Activated B cell treated with CpG ODN at 0.5 μM for 24 hours (primary cell): ENCODE measurements at regions of chr13 and their contacts with region 1.

Region 1: GRCh38 chr13:21603531-21604448 is at the start of gene MICU2:
- DNase-seq: peak; percentile 93
- ATAC-seq: peak; percentile 94
- H3K4me3 Mint-ChIP-seq: peak within 1 kb of the TSS; percentile 88
- H3K27ac Mint-ChIP-seq: peak within 1 kb of the TSS; percentile 89
- H3K4me1 Mint-ChIP-seq: peaks cover 31% of the 10 kb centered on the region
- H3K27me3 Mint-ChIP-seq: peaks cover 16% of the 10 kb centered on the region
- CTCF ChIP-seq: no peak
- total RNA-seq, gene MICU2: 37.0 and 41.3 TPM in 2 replicates

Region 2: GRCh38 chr13:20773194-20774080 is 830.4 kb before region 1 on chr13 and contains the start of gene EEF1AKMT1:
- CTCF ChIA-PET with region 1: no interaction called
- POLR2A ChIA-PET with region 1: no interaction called
- intact Hi-C with region 1: loop called (anchors 5 kb)
- DNase-seq: peak; percentile 94
- ATAC-seq: peak; percentile 95
- H3K4me3 Mint-ChIP-seq: peak within 1 kb of the TSS; percentile 98
- H3K27ac Mint-ChIP-seq: peak within 1 kb of the TSS; percentile 99
- H3K4me1 Mint-ChIP-seq: peaks cover 21% of the 10 kb centered on the region
- H3K27me3 Mint-ChIP-seq: no peaks in the 10 kb centered on the region
- CTCF ChIP-seq: no peak
- total RNA-seq, gene EEF1AKMT1: 3.9 and 7.4 TPM in 2 replicates

Region 3: GRCh38 chr13:21297914-21298831 is 305.6 kb before region 1 on chr13:
- CTCF ChIA-PET with region 1: interaction called, 3 read pairs
- POLR2A ChIA-PET with region 1: interaction called, 4 read pairs
- intact Hi-C with region 1: loop called (anchors 1 kb)
- DNase-seq: peak; percentile 84
- ATAC-seq: peak; percentile 97
- H3K4me3 Mint-ChIP-seq: peak overlapping the region; percentile 89
- H3K27ac Mint-ChIP-seq: peak overlapping the region; percentile 77
- H3K4me1 Mint-ChIP-seq: peaks cover 18% of the 10 kb centered on the region
- H3K27me3 Mint-ChIP-seq: no peaks in the 10 kb centered on the region
- CTCF ChIP-seq: no peak

Region 4: DNA sequence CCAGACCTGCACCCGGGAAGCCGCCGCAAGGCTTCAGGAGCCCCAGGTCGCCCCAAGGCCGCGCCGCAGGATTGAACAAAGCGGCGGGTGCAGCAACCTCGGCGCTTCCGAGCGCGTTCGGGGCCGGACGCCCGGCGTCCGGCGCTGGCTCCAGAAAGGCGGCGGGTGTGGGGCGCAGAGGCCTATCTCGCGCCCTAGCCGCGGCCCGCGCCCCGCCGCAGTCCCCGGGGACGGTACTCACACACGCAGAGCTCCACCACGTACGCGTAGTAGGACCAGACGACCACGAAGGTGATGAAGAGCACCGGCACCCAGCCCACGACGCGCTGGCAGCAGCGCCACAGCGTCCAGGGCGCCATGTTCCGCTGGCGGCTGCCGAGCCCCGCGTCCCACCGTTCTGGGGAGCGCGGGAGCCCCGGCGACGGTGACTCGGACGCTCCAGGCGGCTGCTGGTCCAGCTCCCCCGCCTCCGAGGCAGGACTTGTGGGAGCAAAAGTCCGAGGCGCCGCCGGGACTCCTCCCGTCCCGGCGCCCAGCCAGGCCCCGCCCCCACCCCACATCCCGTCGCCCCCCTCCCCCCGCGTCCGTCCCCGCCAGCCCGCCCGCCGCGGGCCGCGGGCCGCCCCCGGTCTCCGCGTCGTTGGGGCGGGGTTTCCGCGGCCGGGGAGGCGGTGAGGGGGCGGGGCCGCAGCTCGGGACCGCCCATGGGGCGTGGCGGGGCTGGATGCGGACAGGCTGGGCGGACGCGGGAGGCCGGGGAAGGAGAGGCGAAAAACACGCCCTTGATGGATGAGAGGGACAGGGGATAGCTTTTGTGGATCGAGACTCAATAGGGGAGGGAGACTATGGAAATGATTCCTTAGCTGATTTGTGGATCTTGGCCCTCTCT is 144.7 kb before region 1 on chr13 and contains the start of gene ZDHHC20:
- CTCF ChIA-PET with region 1: no interaction called
- POLR2A ChIA-PET with region 1: interaction called, 17 read pairs
- intact Hi-C with region 1: loop called (anchors 2 kb)
- DNase-seq: peak; percentile 98
- ATAC-seq: peak; percentile 91
- H3K4me3 Mint-ChIP-seq: peak within 1 kb of the TSS; percentile 90
- H3K27ac Mint-ChIP-seq: peak within 1 kb of the TSS; percentile 86
- H3K4me1 Mint-ChIP-seq: peaks cover 36% of the 10 kb centered on the region
- H3K27me3 Mint-ChIP-seq: no peaks in the 10 kb centered on the region
- CTCF ChIP-seq: no peak
- total RNA-seq, gene ZDHHC20: 45.0 and 49.2 TPM in 2 replicates

Region 5: GRCh38 chr13:21657538-21657937 is 53.7 kb after region 1 on chr13:
- CTCF ChIA-PET with region 1: no interaction called
- POLR2A ChIA-PET with region 1: no interaction called
- intact Hi-C with region 1: no loop called
- DNase-seq: no peak
- ATAC-seq: no peak
- H3K4me3 Mint-ChIP-seq: no peak overlapping the region
- H3K27ac Mint-ChIP-seq: no peak overlapping the region
- H3K4me1 Mint-ChIP-seq: no peaks in the 10 kb centered on the region
- H3K27me3 Mint-ChIP-seq: peaks cover 38% of the 10 kb centered on the region
- CTCF ChIP-seq: no peak

Region 6: DNA sequence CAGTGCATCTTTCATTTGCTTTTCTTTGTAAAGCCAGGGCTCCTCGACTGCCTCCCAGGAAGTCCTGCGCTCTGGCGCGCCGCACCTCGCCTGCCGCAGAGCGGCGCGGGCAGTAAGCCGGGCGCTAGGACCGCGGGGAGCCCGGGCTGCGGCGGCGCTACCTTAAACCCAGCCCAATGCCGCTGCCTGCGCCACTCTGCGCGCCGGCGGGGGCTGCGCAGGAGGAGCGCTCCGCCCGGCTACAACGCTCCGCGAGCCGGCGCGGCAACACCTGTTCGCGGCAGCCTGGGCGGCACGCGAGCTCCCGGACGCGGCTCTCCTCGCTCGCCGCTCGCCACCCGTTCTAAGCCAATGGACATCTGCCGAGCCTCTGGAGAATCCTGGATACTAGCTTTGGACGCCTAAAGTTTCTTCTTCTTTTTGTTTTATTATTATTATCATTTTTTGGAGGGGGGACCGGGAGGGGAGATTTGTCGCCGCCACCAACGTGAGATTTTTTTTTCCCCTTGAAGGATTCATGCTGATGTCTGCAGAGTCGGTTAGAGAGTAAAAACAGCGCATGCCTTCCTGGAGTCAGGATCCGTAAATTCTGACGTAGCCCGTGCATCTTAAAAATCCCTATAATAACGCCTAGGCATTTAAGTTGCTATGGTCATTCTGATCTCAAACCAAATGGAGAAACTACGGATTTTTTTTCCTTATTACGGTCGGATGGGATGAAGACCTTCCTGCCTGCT is 67.3 kb after region 1 on chr13 and contains the start of gene FGF9:
- CTCF ChIA-PET with region 1: no interaction called
- POLR2A ChIA-PET with region 1: interaction called, 40 read pairs
- intact Hi-C with region 1: loop called (anchors 1 kb)
- DNase-seq: peak; percentile 76
- ATAC-seq: peak; percentile 77
- H3K4me3 Mint-ChIP-seq: peak within 1 kb of the TSS; percentile 85
- H3K27ac Mint-ChIP-seq: peak within 1 kb of the TSS; percentile 61
- H3K4me1 Mint-ChIP-seq: peaks cover 48% of the 10 kb centered on the region
- H3K27me3 Mint-ChIP-seq: peaks cover 43% of the 10 kb centered on the region
- CTCF ChIP-seq: no peak
- total RNA-seq, gene FGF9: 0.22 and 0.49 TPM in 2 replicates

Region 7: DNA sequence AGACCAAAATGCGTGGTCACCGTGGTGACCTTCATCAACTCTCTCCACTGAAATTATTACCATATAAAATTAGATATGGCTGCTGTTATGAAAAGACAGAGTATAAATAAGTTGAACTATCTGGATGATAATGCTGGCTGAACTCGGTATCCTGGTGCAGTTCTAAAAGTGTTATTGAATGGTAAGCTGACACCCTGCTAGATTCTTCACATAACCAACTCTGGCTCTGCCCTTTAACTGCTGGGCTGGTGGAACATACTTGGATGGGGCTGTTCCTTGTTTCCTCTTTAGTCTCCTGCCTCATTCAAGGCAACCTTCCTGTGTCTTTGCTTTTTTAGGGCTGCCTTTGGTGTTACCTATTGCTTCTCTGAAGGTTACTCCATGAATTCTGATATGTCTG is 174.0 kb after region 1 on chr13:
- CTCF ChIA-PET with region 1: no interaction called
- POLR2A ChIA-PET with region 1: no interaction called
- intact Hi-C with region 1: no loop called
- DNase-seq: no peak
- ATAC-seq: no peak
- H3K4me3 Mint-ChIP-seq: no peak overlapping the region
- H3K27ac Mint-ChIP-seq: no peak overlapping the region
- H3K4me1 Mint-ChIP-seq: no peaks in the 10 kb centered on the region
- H3K27me3 Mint-ChIP-seq: no peaks in the 10 kb centered on the region
- CTCF ChIP-seq: no peak

Region 8: GRCh38 chr13:22126433-22127021 is 522.7 kb after region 1 on chr13:
- CTCF ChIA-PET with region 1: no interaction called
- POLR2A ChIA-PET with region 1: no interaction called
- intact Hi-C with region 1: no loop called
- DNase-seq: no peak
- ATAC-seq: peak; percentile 97
- H3K4me3 Mint-ChIP-seq: peak overlapping the region; percentile 26
- H3K27ac Mint-ChIP-seq: peak overlapping the region; percentile 68
- H3K4me1 Mint-ChIP-seq: peaks cover 30% of the 10 kb centered on the region
- H3K27me3 Mint-ChIP-seq: no peaks in the 10 kb centered on the region
- CTCF ChIP-seq: no peak

Region 9: GRCh38 chr13:23579072-23579895 is 1975.5 kb after region 1 on chr13:
- CTCF ChIA-PET with region 1: no interaction called
- POLR2A ChIA-PET with region 1: interaction called, 4 read pairs
- intact Hi-C with region 1: loop called (anchors 10 kb)
- DNase-seq: peak; percentile 95
- ATAC-seq: peak; percentile 97
- H3K4me3 Mint-ChIP-seq: peak overlapping the region; percentile 79
- H3K27ac Mint-ChIP-seq: peak overlapping the region; percentile 41
- H3K4me1 Mint-ChIP-seq: peaks cover 11% of the 10 kb centered on the region
- H3K27me3 Mint-ChIP-seq: peaks cover 31% of the 10 kb centered on the region
- CTCF ChIP-seq: no peak